A549 (cell line): ENCODE measurements at regions of chr3 and their contacts with region 1.

Region 1: GRCh38 chr3:150528354-150528797 is 17.9 kb downstream of the SERP1 start:
- DNase-seq: peak in 1 of 2 experiments; percentile 16
- ATAC-seq: peak in 1 of 2 experiments; percentile 52; a peak in 2 of 6 replicates
- H3K4me3 ChIP-seq: no peak overlapping the region
- H3K27ac ChIP-seq: no peak overlapping the region
- H3K4me1 ChIP-seq: no peaks in the 10 kb centered on the region
- CTCF ChIP-seq: peak; percentile 45
- EP300 ChIP-seq: no peak
- POLR2A ChIP-seq: no peak
- RAD21 ChIP-seq: peak; percentile 54 to 58

Region 2: DNA sequence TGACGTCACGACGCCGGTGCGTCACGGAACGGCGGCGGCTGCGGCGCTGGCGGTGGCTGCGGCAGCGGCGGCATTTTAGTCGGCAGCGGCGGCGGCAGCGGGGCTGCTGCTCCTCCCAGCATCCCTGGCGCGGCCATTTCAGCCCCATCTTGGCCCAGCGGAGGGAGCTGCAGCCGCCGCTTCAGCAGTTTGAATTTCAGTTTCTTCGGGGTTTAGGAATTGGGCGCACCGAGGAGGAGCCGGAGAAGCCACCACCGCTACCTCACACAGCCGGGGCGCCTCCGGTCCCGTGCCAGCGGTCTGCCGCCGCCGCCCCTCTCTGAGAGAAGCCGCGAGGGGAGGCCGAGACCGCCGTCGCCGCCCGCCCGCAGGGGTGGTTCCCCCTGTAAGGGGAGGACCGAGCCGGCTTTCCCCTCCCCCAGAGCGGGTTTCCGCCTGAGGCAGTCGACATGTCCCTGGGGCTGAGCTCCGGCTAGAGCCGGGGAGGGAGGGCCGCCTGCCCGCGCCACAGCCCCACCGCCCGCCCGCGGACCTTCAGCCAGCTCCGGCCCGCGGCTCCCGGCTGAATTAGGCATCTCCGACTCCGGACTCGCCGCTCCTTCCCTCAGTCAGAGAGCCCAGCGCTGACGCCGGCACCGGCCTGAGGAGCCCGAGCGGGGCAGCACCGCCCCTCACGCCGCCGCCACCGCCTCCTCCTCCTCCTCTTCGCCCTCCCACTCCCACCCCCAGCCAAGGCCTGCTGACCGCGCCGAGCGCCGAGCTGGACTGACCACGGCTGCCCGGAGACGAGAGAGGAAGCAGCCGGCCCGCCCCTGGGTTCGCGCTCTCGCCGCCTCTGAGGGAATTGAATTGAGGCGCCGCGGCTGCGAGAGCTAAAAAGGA is 119.9 kb before region 1 on chr3 and contains the start of gene TSC22D2:
- CTCF ChIA-PET with region 1: no interaction called
- POLR2A ChIA-PET with region 1: no interaction called
- DNase-seq: peak; percentile 81 to 95
- ATAC-seq: peak; percentile 75 to 85
- H3K4me3 ChIP-seq: peak within 1 kb of the TSS; percentile 78
- H3K27ac ChIP-seq: peak within 1 kb of the TSS; percentile 98 to 99
- H3K4me1 ChIP-seq: peaks cover 19% of the 10 kb centered on the region; the same call in 2 of the 3 replicates
- CTCF ChIP-seq: no peak
- EP300 ChIP-seq: no peak
- POLR2A ChIP-seq: peak; percentile 89
- RAD21 ChIP-seq: peak in 1 of 2 experiments; percentile 38; a peak in 3 of 5 replicates
- polyA plus RNA-seq, gene TSC22D2: 13.8 and 13.9 TPM in 2 replicates

Region 3: DNA sequence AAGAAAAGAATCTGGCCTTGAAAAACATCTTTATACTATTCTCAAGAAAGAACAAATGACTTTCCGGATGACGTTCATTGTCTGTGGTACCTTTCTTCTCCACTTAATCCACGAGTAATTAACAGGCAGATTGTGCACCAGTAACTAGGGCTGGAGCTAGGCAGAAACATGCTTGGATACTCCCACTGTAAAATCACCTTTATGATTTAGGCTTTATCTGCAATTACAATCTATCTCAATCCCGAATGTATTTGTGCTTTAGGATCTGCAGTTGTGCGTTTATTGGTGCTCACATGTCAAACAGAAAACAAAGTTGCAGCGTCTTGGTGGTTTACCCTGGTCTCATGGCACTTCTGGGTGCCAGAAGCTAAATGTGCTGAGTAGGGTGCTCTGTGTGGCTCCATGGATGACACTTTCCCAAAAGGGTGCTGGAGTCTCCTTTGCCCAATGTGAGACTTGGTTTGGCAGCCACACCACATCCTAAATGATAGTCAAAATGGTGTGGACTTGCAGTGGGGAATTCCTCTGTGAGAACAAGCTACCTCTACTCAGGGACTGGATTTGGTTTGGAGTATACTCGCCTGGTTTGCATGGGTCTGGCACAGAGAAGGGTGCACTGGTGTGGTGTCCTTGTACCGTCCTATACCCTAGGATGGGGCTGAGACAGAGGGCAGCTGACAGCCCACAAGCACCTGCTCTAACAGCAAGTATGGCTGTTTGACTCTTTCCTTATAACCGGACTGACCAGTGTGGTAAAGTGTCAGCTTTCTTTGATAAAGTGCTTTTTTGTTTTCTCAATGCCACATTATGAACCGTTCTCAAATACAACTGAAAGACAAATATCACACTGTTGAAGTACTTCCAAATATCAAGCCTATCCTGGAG is 10.2 kb after region 1 on chr3:
- CTCF ChIA-PET with region 1: interaction called, 14 read pairs
- POLR2A ChIA-PET with region 1: no interaction called
- DNase-seq: no peak
- ATAC-seq: peak; percentile 52 to 67
- H3K4me3 ChIP-seq: no peak overlapping the region
- H3K27ac ChIP-seq: no peak overlapping the region
- H3K4me1 ChIP-seq: no peaks in the 10 kb centered on the region; the same call in 2 of the 3 replicates
- CTCF ChIP-seq: no peak
- EP300 ChIP-seq: no peak
- POLR2A ChIP-seq: no peak
- RAD21 ChIP-seq: no peak

Region 4: DNA sequence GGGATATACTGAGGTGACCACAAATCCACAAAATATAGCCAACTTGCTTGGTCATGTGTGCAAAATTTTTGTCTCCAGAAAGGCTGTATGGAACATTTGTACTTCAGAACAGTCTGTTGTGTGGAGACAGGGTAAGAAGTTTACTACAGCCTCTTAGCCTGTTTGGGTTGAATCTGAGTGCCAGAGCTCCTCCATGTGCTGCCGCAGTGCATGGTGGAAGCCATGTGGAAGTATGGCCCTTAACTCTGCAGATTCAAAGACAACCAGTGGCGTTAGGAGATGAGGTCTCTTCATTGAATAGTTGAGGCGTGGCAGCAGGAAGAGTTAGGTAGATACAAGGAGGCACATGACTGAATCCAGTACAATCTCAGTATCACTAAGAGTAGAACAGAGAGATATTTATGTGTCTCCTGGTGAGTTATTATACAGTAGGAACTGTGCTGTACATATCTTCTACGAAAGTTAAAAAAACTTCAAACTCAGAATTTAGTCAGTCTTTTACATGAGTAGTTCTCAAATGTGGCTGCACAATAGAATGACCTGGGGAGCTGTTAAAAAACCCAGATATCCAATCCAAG is 27.6 kb after region 1 on chr3:
- CTCF ChIA-PET with region 1: no interaction called
- POLR2A ChIA-PET with region 1: no interaction called
- DNase-seq: no peak
- ATAC-seq: no peak; a peak in 1 of 6 replicates
- H3K4me3 ChIP-seq: no peak overlapping the region
- H3K27ac ChIP-seq: no peak overlapping the region
- H3K4me1 ChIP-seq: no peaks in the 10 kb centered on the region
- CTCF ChIP-seq: no peak
- EP300 ChIP-seq: no peak
- POLR2A ChIP-seq: no peak
- RAD21 ChIP-seq: no peak

Region 5: DNA sequence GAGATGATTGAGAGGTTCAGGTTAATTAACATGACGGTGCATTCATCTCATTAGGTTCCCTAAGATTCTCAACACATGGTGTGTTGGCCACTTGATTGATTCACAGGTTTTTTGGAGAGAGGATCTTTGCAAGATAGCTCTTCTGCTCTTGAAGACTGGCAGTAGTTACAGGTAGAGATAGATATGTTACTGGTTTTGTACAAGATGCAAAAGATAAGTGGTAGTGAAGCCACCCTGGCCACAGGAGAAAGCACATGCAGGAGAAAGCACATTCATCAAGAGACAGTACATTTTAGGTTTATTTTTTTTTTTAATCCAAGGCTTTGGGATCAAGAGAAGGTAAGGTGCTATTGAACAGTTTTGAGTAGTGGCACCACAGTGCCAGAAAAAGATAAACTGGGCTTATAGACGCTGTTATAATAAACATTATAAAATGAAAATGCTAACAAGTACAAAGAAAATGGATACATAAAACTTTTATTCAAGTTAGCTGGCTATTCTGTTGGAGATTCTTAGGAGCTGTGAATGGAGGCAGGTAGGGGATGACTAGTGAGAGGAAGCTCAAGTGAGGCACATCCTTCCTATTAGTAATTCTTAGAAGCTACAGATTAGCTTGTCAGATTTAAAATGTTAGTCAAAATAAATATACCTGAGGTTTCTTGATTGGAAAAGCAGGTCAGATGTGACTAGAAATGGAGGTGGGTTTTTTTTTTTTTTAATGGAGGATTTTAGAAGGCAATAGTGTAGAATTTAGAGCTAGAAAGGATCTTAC is 85.5 kb after region 1 on chr3:
- CTCF ChIA-PET with region 1: no interaction called
- POLR2A ChIA-PET with region 1: no interaction called
- DNase-seq: no peak
- ATAC-seq: no peak
- H3K4me3 ChIP-seq: no peak overlapping the region
- H3K27ac ChIP-seq: no peak overlapping the region
- H3K4me1 ChIP-seq: peaks cover 7% of the 10 kb centered on the region; the same call in 2 of the 3 replicates
- CTCF ChIP-seq: no peak
- EP300 ChIP-seq: no peak
- POLR2A ChIP-seq: no peak
- RAD21 ChIP-seq: no peak

Region 6: GRCh38 chr3:150627557-150627956 is 99.2 kb after region 1 on chr3:
- CTCF ChIA-PET with region 1: no interaction called
- POLR2A ChIA-PET with region 1: no interaction called
- DNase-seq: no peak
- ATAC-seq: no peak
- H3K4me3 ChIP-seq: no peak overlapping the region
- H3K27ac ChIP-seq: no peak overlapping the region
- H3K4me1 ChIP-seq: peaks cover 10% of the 10 kb centered on the region; the same call in 2 of the 3 replicates
- CTCF ChIP-seq: no peak
- EP300 ChIP-seq: no peak
- POLR2A ChIP-seq: no peak
- RAD21 ChIP-seq: no peak